Mammary epithelial cell (primary cell): ENCODE measurements at regions of chr11 and their contacts with region 1.

Region 1: DNA sequence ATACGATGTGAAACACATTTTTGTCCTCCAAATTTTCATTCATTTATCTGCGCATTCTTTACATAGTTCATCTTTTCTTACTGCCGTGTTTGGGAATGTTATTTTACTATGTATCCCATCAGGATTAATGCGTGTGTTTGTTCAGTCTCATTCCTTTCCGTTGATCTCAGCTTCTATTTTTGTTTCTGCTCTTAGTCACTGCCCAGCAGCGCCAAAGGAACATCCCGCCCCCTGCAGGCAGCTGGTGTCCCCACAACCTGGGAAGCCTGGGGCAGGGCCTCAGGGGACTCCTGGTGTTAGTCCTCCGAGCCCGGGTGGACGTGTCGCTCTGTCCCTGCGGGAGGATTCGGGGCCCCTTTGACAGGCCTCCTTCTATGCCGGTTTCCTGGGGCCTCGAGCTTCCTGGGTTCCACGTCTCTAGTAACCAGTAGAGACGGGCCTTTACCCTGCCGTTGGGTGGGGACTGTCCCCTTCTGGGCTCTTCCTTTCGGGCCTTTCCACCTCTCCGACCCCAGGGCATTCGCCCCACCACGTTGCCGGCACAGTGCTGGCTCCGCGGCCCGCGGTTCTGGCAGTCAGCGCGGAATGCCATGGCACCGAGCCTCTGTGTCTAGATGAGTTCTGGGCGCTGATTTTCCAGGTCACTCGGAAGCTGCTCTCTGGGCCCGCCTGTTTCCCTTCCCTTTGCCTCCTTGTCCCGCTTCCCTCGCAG is 39.8 kb downstream of the WEE1 start:
- DNase-seq: peak; percentile 88
- H3K4me3 ChIP-seq: peak overlapping the region; percentile 6 to 26 (median 21)
- H3K27ac ChIP-seq: peak overlapping the region; percentile 91
- H3K4me1 ChIP-seq: peaks cover 27% of the 10 kb centered on the region
- H3K27me3 ChIP-seq: no peaks in the 10 kb centered on the region
- CTCF ChIP-seq: peak; percentile 78 to 97

Region 2: DNA sequence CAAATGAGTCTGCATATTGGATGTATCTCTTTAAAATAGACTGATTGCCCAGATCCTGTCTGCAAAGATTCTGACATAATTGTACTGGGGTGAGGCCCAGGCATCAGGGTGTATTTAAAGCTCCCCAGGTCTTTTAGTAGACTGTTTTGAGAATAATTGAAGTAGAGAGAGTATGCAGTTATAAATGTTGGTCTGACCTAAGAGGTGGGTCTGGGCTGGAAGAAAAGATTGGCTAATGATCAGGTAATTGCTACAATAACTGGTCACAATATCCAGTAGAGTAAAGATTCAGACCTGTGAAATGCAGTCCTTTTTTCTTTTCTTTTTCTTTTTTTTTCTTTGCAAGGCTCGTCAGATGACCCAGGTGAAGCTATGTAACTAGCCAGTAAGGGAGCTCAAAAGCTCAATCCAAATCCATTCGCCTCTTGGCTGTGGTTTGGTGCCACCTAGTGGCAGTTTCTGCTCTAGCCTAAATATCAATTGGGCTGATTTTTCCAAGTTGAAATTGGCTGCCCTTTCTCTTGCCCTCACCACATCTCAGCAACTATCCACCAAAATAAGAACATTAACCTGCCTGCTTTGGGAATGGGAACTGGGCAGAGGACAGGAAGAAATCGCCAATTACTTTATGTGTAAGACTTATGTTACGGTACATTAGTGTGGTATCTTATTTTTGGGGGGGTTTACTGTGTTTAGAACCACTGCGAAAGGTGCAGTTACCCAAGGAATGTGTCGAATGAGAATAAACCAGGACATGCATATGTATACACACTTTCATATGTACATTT is 106.6 kb before region 1 on chr11:
- CTCF ChIA-PET with region 1: no interaction called
- dilution Hi-C with region 1: no loop called
- in situ Hi-C with region 1: no loop called
- intact Hi-C with region 1: loop called (anchors 5 kb)
- DNase-seq: peak; percentile 60
- H3K4me3 ChIP-seq: no peak overlapping the region
- H3K27ac ChIP-seq: no peak overlapping the region
- H3K4me1 ChIP-seq: no peaks in the 10 kb centered on the region
- H3K27me3 ChIP-seq: no peaks in the 10 kb centered on the region
- CTCF ChIP-seq: peak; percentile 88 to 91

Region 3: GRCh38 chr11:9550191-9550628 is 63.1 kb before region 1 on chr11:
- CTCF ChIA-PET with region 1: no interaction called
- dilution Hi-C with region 1: no loop called
- in situ Hi-C with region 1: no loop called
- intact Hi-C with region 1: no loop called
- DNase-seq: no peak
- H3K4me3 ChIP-seq: no peak overlapping the region
- H3K27ac ChIP-seq: no peak overlapping the region
- H3K4me1 ChIP-seq: no peaks in the 10 kb centered on the region
- H3K27me3 ChIP-seq: no peaks in the 10 kb centered on the region
- CTCF ChIP-seq: no peak

Region 4: DNA sequence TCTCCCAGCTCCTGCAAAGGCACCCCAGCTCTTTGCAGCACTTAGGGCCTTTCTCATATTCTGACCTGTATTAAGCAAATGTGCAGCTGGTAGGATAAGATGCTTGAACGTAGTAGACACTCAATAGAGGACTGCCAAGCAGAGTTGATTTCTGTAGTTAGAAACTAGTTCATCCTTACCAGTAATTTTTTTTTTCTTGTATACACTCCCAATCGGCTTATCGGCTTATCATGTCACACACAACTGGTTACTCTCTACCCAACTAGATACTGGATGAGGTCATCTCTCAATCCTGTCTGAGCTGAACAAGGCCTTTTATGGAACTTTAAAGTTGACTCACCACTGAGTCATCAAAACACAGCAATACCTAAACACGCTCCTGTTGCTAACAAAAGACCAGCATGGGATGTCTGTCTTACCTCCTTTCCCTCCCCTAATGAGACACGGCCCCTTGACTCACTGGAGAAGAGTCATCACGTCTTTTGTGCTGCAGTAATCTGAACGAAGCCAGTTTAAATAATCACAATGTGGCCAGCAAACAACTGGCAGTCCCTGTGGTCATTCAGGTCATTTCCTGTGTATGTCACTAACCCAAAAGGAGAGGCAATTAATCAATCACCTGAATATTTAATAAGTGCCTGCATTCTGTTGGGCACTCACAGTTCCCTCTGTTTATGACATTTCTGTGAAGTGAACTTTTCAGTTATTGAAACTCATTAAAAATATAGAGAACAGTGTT is 47.3 kb before region 1 on chr11:
- CTCF ChIA-PET with region 1: no interaction called
- dilution Hi-C with region 1: no loop called
- in situ Hi-C with region 1: no loop called
- intact Hi-C with region 1: loop called (anchors 1 kb)
- DNase-seq: peak; percentile 100
- H3K4me3 ChIP-seq: peak overlapping the region in 1 of 3 experiments; percentile 12
- H3K27ac ChIP-seq: peak overlapping the region; percentile 100
- H3K4me1 ChIP-seq: peaks cover 53% of the 10 kb centered on the region
- H3K27me3 ChIP-seq: no peaks in the 10 kb centered on the region
- CTCF ChIP-seq: no peak

Region 5: GRCh38 chr11:9601037-9601875 is 12.0 kb before region 1 on chr11:
- CTCF ChIA-PET with region 1: interaction called, 3 read pairs
- dilution Hi-C with region 1: no loop called
- in situ Hi-C with region 1: no loop called
- intact Hi-C with region 1: loop called (anchors 1 kb)
- DNase-seq: peak; percentile 42
- H3K4me3 ChIP-seq: no peak overlapping the region
- H3K27ac ChIP-seq: peak overlapping the region; percentile 80
- H3K4me1 ChIP-seq: peaks cover 18% of the 10 kb centered on the region
- H3K27me3 ChIP-seq: no peaks in the 10 kb centered on the region
- CTCF ChIP-seq: no peak

Region 6: DNA sequence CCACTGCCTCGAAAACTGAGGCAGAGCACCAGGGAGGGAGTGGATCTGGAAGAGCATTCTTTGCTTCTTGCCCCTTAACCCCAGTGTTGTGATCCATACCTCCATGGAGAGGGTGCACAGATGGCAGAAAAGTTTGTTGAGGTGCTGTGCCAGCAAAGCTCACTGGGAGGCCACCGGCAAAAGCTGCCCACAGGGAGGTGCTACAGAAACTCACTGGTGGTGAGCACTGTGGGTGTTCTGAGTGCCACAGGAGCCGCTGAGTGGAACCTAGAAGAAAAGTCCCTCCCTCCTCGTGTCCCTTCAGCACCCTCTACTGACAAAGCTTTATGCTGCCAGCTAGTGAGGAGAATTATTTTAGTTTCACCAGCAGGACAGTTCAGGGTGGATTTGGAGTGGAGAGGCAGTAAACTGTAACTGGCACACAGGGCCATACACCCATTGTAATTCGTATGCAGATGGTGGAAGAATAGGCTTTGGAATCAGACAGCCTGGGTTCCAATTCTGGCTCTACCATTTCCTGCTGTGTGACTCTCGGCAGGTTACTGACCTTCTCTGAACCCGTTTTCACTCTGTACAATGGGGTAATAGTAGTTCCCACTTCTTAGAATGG is 135.2 kb after region 1 on chr11:
- CTCF ChIA-PET with region 1: interaction called, 5 read pairs
- dilution Hi-C with region 1: no loop called
- in situ Hi-C with region 1: loop called (anchors 10 to 25 kb)
- intact Hi-C with region 1: loop called (anchors 1 kb)
- DNase-seq: peak; percentile 68
- H3K4me3 ChIP-seq: no peak overlapping the region
- H3K27ac ChIP-seq: peak overlapping the region; percentile 18
- H3K4me1 ChIP-seq: peaks cover 18% of the 10 kb centered on the region
- H3K27me3 ChIP-seq: no peaks in the 10 kb centered on the region
- CTCF ChIP-seq: peak; percentile 72 to 74

Region 7: GRCh38 chr11:9962722-9963121 is 349.4 kb after region 1 on chr11:
- CTCF ChIA-PET with region 1: no interaction called
- dilution Hi-C with region 1: no loop called
- in situ Hi-C with region 1: no loop called
- intact Hi-C with region 1: no loop called
- DNase-seq: no peak
- H3K4me3 ChIP-seq: no peak overlapping the region
- H3K27ac ChIP-seq: no peak overlapping the region
- H3K4me1 ChIP-seq: no peaks in the 10 kb centered on the region
- H3K27me3 ChIP-seq: no peaks in the 10 kb centered on the region
- CTCF ChIP-seq: no peak

Region 8: DNA sequence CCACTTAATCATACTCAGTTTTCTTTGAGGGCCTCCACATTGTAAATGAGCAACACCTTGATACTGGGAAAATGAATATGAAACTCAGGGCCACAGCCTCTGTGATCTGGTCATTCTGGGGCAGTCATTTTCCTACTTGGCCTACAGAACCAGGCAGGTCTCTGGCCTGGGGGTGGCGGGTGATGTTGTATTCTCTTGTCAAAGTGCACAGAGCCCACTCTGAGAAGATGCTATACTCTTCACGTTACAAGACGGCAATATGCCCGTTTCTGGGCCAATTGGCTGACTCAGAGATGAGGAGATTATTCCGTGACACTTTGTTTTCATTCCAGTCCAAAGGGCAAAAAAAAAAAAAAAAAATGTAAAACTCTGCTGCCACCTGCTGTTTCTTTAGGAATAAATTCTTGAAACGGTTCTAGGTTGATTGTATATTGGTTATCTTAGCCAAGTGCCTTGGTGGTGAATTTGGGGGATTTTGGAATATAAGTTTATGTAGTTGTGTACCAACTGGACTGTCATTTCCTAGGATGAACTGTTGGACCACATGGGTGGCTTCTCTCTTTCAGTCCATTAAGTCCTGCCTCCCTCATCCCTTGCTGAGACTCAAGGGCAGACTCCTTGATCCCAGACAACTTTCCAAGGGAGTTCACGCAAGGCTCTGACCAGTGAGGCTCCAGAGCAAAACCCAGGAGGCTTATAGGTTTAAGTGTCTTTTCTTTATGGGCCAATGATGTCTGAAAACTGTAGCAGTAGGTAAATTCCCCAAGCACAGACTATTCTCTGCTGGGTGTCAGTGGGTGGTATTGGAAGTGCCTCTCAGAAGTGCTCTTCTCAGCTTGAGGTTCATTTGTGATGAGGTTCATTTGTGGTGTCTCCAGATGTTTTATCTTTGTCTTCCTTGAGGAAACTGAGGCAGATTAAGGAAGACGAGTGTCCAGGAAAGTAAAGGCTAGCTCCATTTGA is 709.8 kb after region 1 on chr11:
- CTCF ChIA-PET with region 1: no interaction called
- dilution Hi-C with region 1: no loop called
- in situ Hi-C with region 1: loop called in 1 of 2 experiments (anchors 25 kb)
- intact Hi-C with region 1: loop called (anchors 5 kb)
- DNase-seq: peak; percentile 84
- H3K4me3 ChIP-seq: no peak overlapping the region
- H3K27ac ChIP-seq: peak overlapping the region; percentile 57
- H3K4me1 ChIP-seq: peaks cover 6% of the 10 kb centered on the region
- H3K27me3 ChIP-seq: no peaks in the 10 kb centered on the region
- CTCF ChIP-seq: peak; percentile 42 to 49